ENCODE measurements at regions of chr14 and their contacts with region 1.

Region 1: GRCh38 chr14:100645192-100645990 is 58.2 kb upstream of the BEGAIN start:
- DNase-seq: peak; percentile 88

Region 2: GRCh38 chr14:100440187-100440631 is 205.2 kb before region 1 on chr14:
- intact Hi-C with region 1: loop called (anchors 5 kb)
- DNase-seq: no peak